Heart left ventricle (tissue), 16 donors: ENCODE measurements at regions of chr1 and their contacts with region 1.

Region 1: GRCh38 chr1:221543529-221544120 is 198.3 kb downstream of the DUSP10 start:
- DNase-seq: no peak
- ATAC-seq: peak in 1 of 4 donors; percentile 13
- H3K4me3 ChIP-seq: no peak overlapping the region
- H3K27ac ChIP-seq: no peak overlapping the region
- H3K4me1 ChIP-seq: no peaks in the 10 kb centered on the region
- H3K27me3 ChIP-seq: peaks cover 0 to 5% (median 0%) of the 10 kb centered on the region in 9 donors
- CTCF ChIP-seq: peak in 11 of 12 donors; percentile 19 to 64 (median 54)
- POLR2A ChIP-seq: no peak

Region 2: DNA sequence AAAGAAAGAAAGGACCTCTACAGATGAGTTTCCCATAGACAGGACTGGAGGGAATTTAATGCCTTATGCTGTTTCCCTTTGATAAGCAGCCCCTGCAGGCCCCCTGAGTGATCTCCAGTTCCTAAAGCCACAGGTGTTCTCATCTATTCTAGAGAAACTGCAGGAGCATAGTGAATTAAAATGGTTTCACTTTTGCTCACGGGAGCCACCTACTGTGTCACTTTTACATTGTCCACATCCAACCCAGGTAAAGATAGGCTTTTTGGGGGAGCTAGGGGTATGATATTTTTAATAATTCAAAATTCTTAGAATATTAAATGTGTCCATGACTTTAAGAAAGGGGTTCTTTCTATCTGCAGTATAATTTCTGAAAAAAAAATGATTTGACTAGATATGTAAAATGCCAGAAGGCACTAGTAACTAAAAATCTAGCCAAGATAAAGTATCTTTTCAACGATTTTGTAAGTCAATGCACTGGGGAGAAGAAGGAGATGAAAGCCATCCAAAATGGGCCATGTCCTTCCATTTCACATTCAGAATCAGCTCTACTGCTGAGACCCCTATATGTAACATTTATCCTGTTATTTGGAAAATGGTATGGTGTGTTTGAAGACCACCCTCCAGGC is 465.6 kb after region 1 on chr1:
- intact Hi-C with region 1: loop called in 2 of 10 experiments (anchors 5 to 10 kb)
- DNase-seq: no peak
- ATAC-seq: peak in 1 of 4 donors; percentile 57
- H3K4me3 ChIP-seq: no peak overlapping the region
- H3K27ac ChIP-seq: no peak overlapping the region
- H3K4me1 ChIP-seq: no peaks in the 10 kb centered on the region
- H3K27me3 ChIP-seq: no peaks in the 10 kb centered on the region
- CTCF ChIP-seq: peak in 10 of 12 donors; percentile 15 to 53 (median 40)
- POLR2A ChIP-seq: no peak